ENCODE measurements at regions of chr2 and their contacts with region 1.

Region 1: DNA sequence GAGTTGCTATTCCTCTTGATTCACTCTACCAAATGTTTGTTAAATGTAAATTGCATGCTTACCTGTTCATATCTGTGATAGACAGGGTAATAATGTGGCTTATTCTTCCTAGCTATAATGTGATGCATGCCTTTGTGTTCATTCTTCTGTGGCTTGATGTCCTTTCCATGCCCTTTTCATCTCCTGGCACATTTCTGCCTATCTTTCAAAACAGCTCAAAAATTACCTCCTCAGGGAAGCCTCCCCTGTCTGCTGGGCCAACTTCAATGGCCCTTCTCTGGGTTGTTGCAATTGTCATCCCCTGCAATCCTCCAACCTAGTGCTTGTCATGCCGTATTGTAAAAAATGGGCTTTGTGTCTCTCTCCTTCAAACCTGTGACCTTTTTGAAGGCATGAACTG is 52.8 kb upstream of the LHCGR start:
- DNase-seq: no peak
- H3K4me3 ChIP-seq: no peak overlapping the region
- H3K27ac ChIP-seq: no peak overlapping the region
- H3K4me1 ChIP-seq: no peaks in the 10 kb centered on the region
- H3K27me3 ChIP-seq: peaks cover 2% of the 10 kb centered on the region
- CTCF ChIP-seq: no peak

Region 2: DNA sequence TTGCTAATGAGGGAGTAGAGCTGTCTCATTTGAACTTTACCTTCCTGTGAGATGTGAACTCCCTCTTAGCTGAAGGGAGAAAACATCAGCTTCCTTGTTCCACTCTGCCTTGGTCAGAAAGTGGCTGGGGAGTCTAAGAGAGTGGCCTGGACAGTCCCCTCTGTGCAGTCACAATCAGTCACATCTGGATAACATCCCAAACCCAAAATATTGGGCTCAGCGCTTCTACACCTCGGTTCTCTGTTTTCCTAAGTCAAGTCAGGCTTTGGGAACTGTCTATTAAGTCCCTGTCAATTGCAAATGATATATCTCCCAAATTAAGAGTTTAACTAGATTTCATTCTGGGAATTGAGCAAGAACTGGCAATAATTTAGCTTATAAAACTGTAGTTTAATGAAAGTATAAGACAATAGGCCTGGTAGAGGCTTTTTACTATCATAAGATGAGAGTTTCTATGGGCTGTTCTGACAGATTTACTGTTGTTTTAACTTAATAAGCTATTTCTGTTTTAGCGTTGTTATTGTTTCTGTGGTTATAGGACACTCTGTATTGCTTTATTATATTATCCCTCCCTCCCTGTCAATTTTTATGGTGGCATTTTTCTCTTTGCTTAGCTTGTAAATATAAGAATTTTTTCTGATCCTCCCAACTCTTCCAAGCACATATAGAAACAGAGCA is 82.3 kb after region 1 on chr2:
- CTCF ChIA-PET with region 1: no interaction called
- dilution Hi-C with region 1: no loop called
- in situ Hi-C with region 1: no loop called
- intact Hi-C with region 1: loop called (anchors 10 kb)
- DNase-seq: no peak
- H3K4me3 ChIP-seq: no peak overlapping the region
- H3K27ac ChIP-seq: no peak overlapping the region
- H3K4me1 ChIP-seq: no peaks in the 10 kb centered on the region
- H3K27me3 ChIP-seq: peaks cover 2% of the 10 kb centered on the region
- CTCF ChIP-seq: no peak

Region 3: DNA sequence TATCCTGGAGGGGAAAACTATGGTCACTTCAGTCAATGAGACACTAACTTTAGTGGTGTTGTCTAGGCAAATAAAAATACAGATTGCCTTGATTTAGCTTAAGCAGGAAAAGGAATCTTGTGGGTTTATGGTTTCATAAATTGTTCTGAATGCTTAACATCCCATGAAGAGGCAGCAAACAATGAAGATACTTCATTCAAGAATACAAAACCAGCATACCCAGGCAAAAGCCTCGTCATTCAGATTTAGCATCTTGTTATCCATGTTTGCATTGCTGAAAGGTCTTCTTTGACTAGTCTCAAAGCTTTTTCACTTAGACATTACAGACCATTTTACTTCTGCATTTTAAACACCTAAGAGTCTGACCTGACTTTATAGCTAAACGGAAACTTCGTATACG is 618.7 kb after region 1 on chr2:
- CTCF ChIA-PET with region 1: no interaction called
- dilution Hi-C with region 1: no loop called
- in situ Hi-C with region 1: no loop called
- intact Hi-C with region 1: no loop called
- DNase-seq: no peak
- H3K4me3 ChIP-seq: no peak overlapping the region
- H3K27ac ChIP-seq: no peak overlapping the region
- H3K4me1 ChIP-seq: no peaks in the 10 kb centered on the region
- H3K27me3 ChIP-seq: no peaks in the 10 kb centered on the region
- CTCF ChIP-seq: no peak